Left ventricle myocardium superior (tissue), 1 donor: ENCODE measurements at regions of chr1 and their contacts with region 1.

Region 1: GRCh38 chr1:8374812-8375211 is 56.9 kb downstream of the SLC45A1 start:
- DNase-seq: no peak
- ATAC-seq: no peak

Region 2: DNA sequence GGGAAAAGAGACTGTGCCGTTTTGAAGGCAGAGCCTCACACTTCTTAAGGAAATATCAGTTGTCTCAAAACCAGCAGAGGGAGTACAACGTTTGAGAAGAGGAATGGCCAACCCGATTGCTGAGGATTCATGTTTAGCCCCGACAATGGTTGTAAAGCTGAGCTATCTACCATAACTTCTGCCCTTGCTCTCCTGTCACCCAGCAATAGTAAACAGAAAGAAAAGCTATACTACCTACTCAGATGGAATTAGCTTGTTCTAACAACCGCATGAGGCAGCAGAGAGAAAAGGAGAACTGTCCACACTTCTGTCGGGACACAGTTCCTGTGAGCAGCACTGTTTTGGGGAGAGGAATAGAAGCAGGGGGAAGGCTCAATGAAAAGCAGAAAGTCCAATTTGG is 34.3 kb after region 1 on chr1:
- intact Hi-C with region 1: loop called (anchors 5 kb)
- DNase-seq: no peak
- ATAC-seq: peak; percentile 57